Upper lobe of right lung (tissue), 1 donor: ENCODE measurements at regions of chr1 and their contacts with region 1.

Region 1: DNA sequence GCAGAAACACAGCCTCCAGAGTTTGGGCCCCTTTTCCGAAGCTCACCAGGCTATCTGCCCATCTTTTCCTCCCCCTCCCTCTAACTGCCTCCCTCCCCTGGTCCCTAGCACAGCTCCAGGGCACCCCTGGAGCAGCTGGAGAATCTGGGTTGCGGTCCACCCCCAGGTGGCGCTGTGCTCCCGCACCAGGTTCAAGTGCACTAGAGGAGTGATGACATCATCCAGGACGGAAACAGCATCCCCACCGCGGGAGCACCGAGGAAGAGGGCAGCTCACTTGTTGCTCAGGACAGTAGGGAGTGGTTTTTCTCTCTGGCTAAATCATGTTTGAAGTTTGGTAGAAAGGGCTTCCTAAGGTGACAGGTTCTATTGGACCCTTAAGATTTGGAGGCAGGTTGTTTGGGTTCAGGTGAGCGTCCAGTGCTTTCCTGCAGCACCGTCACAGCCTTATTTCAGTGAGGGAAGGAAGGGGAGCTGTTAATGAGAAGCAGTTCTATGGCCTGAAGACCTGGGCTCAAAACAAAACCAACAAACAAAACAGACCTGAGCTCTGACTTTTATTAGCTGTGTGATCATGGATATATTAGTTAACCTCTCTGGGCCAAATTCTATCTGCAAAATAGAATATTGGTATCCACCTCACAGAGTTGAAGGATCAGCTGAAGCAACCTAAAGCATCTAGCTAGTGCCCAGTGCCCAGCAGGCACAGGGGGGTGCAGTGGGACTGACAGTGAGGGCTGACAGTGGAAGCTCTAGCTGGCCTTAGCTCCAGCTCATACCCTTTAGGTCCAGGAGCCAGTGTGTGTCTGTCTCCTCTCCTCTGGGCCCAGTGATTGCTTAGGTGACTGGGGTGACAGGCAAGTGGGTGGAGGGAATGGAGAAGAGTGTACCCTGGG is 7.5 kb downstream of the SHISA4 start:
- DNase-seq: peak; percentile 92
- ATAC-seq: peak; percentile 93
- H3K4me3 ChIP-seq: no peak overlapping the region
- H3K27ac ChIP-seq: peak overlapping the region; percentile 30
- H3K4me1 ChIP-seq: no peaks in the 10 kb centered on the region
- H3K27me3 ChIP-seq: no peaks in the 10 kb centered on the region
- CTCF ChIP-seq: peak; percentile 91

Region 2: GRCh38 chr1:201774224-201774982 is 121.8 kb before region 1 on chr1:
- intact Hi-C with region 1: no loop called
- DNase-seq: no peak
- ATAC-seq: no peak
- H3K4me3 ChIP-seq: no peak overlapping the region
- H3K27ac ChIP-seq: no peak overlapping the region
- H3K4me1 ChIP-seq: peaks cover 10% of the 10 kb centered on the region
- H3K27me3 ChIP-seq: no peaks in the 10 kb centered on the region
- CTCF ChIP-seq: no peak

Region 3: DNA sequence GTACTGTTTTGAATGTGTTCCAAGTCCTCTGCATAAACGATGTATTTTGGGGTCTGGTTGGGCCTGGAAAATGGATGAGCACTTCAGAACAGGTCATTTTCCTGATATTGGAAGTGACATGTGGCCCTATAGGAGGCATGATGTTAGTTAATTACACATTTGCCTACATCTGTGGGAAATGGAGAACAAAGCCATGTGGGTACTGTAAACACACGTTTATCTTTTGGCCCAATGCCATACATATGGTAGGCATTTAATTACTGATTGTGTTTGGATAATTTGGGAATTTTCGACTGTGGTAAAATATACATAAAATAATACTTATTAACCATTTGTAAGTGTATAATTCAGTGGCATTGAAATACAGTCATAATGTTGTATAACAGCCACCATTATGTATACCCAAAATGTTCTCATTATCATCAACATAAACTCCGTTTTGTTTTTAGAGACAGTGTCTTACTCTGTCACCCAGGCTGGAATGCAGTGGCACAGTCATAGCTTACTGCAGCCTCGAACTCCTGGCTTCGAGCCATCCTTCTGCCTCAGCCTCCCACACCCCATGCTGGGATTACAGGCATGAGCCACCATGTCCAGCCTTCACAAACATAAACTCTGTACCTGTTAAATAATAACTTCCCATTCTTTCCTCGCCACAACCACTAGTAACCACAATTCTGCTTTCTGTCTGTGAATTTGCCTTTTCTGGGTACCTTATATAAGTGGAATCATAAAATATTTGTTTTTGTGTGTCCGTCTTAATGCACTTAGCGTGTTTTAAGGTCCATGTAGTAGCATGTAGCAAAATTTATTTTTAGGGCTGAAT is 74.4 kb after region 1 on chr1:
- intact Hi-C with region 1: loop called (anchors 5 kb)
- DNase-seq: no peak
- ATAC-seq: no peak
- H3K4me3 ChIP-seq: no peak overlapping the region
- H3K27ac ChIP-seq: no peak overlapping the region
- H3K4me1 ChIP-seq: no peaks in the 10 kb centered on the region
- H3K27me3 ChIP-seq: no peaks in the 10 kb centered on the region
- CTCF ChIP-seq: no peak